Naive thymus-derived CD4-positive, alpha-beta T cell (primary cell): ENCODE measurements at regions of chr1 and their contacts with region 1.

Region 1: DNA sequence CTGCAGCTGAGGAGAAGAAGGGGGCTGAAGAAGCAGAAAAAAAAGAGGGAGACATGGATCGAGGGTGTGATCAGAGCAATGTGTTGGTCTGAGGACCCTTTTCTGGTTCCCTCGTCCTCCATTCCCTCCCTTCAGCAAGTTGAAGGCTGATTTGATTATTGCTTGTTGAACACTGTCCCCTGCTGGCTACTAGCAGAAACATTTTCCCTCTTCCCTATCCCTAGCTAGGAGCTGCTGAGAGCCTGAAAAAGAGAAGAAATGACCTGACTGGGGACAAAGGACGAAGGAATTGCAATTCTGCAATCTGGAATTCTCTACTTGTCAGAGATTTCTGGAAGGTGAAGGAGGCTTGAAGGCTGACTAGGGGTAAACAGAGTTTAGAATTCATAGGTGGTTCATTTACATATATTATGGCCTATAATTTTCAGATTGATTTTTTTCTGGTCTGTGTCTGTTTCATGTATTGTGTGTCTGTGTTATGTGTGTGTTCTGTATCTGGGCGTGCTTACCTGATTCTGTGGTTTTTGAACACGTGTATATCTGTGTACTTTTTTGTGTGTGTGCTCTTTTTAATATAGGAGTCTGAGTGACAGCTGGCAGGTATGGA is 9.8 kb downstream of the NHLH1 start:
- DNase-seq: peak in 6 of 9 donors; percentile 21 to 45 (median 36)
- ATAC-seq: peak; percentile 73
- H3K4me3 ChIP-seq: no peak overlapping the region
- H3K4me3 Mint-ChIP-seq: peak overlapping the region in 5 of 10 donors; percentile 5 to 54 (median 15)
- H3K27ac ChIP-seq: no peak overlapping the region
- H3K27ac Mint-ChIP-seq: peak overlapping the region in 2 of 9 donors; percentile 4 to 37
- H3K4me1 ChIP-seq: peaks cover 8 to 11% of the 10 kb centered on the region in 2 donors
- H3K4me1 Mint-ChIP-seq: peaks cover 7 to 19% (median 14%) of the 10 kb centered on the region in 7 donors
- H3K27me3 ChIP-seq: no peaks in the 10 kb centered on the region
- H3K27me3 Mint-ChIP-seq: peaks cover 0 to 7% (median 0%) of the 10 kb centered on the region in 5 donors

Region 2: DNA sequence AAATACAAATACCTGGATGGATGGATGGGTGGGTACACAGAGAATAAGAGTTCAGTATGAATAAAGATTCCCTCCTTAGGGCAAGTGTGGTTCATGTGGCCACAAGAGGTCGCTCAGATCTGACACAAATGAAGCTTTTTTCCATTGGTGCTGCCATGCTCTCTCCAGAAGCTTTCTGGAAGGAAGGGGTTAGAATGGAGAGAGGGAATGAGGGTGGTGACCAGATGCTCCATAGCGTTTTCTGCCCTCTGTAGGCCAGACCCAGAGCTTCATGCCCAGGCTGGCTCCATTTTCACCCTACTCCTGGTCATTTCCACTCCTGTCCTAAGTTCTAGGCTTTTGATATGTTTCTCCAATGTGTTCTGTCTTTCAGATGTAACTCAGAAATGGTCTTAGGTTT is 577.7 kb before region 1 on chr1:
- CTCF ChIA-PET with region 1: no interaction called
- POLR2A ChIA-PET with region 1: no interaction called
- intact Hi-C with region 1: loop called in 1 of 2 experiments (anchors 10 kb)
- DNase-seq: peak in 8 of 9 donors; percentile 11 to 52 (median 34)
- ATAC-seq: peak; percentile 66
- H3K4me3 ChIP-seq: no peak overlapping the region
- H3K4me3 Mint-ChIP-seq: no peak overlapping the region
- H3K27ac ChIP-seq: no peak overlapping the region
- H3K27ac Mint-ChIP-seq: no peak overlapping the region
- H3K4me1 ChIP-seq: peaks cover 8 to 48% of the 10 kb centered on the region in 2 donors
- H3K4me1 Mint-ChIP-seq: peaks cover 13 to 24% (median 16%) of the 10 kb centered on the region in 7 donors
- H3K27me3 ChIP-seq: no peaks in the 10 kb centered on the region
- H3K27me3 Mint-ChIP-seq: peaks cover 0 to 55% (median 3%) of the 10 kb centered on the region in 5 donors

Region 3: DNA sequence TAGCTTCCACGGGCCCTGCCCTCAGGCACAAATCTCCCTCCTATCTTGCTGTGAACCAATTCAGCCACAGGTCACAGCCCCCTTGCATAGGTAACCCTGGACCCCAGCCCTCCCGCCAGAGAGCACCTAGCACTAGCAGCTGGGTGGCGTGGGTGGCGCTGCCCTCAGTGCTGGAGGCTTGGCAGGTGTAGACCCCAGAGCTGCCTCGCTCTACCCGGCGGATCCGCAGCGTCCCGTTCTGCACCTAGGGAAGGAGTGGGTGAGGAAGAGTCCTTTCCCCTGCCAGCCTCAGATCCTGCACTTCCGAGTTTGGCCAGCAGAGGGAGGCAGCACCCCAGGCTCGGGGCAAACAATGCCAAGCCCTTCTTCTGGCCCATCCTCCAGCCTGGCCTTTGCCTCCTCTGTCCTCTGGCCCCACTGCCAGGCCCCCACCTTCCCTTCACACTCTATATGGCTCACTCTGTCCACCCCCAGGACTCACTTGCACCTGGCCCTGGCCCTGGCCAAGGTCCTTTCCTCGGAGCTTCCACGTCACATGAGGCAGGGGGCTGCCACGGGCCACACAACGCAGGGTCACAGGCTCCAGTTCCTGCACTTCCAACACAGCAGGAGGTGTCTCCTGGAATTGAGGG is 440.2 kb before region 1 on chr1:
- CTCF ChIA-PET with region 1: no interaction called
- POLR2A ChIA-PET with region 1: no interaction called
- intact Hi-C with region 1: loop called in 1 of 2 experiments (anchors 1 kb)
- DNase-seq: peak; percentile 49 to 90 (median 74)
- ATAC-seq: peak; percentile 90
- H3K4me3 ChIP-seq: no peak overlapping the region
- H3K4me3 Mint-ChIP-seq: no peak overlapping the region
- H3K27ac ChIP-seq: no peak overlapping the region
- H3K27ac Mint-ChIP-seq: peak overlapping the region in 1 of 9 donors; percentile 17
- H3K4me1 ChIP-seq: no peaks in the 10 kb centered on the region
- H3K4me1 Mint-ChIP-seq: peaks cover 0 to 20% (median 11%) of the 10 kb centered on the region in 7 donors
- H3K27me3 ChIP-seq: no peaks in the 10 kb centered on the region
- H3K27me3 Mint-ChIP-seq: peaks cover 0 to 23% (median 8%) of the 10 kb centered on the region in 5 donors

Region 4: DNA sequence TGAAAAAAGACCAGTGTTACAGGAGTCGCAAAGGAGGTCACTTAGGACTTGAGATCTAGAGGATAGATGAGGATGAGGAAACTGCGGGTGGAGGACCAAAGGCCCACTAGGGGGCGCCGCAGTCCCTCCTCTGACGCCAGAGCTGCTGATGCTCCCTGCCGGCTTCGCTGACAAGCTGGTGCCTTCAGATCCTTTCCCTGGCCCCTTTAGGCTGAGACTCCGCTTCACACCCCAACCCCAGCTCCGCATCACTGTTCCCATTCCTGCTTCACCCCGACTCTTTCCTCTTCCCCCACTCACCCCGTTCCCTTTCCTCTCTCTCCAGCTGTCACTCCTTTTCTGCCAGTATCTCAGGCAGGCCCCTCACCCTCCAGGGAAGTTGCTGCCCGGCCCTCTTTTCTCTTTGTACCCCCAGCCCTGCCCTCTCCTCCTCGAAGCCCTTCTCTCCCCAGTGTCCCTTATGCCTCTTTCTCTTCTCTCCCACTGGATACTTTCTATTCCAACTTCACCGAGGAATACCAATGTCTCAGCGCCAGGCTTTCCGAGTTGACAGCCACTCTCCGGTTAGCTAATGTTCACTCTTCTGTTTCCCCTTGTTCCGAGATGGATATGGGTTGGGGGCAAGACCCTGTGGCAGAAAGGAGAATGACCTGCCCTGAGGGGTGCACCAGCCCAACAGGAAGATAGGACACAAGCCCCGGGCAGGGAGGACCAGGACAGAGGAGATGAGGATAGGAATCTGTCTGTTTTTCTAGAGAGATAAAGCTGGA is 290.8 kb before region 1 on chr1:
- CTCF ChIA-PET with region 1: interaction called, 4 read pairs
- POLR2A ChIA-PET with region 1: no interaction called
- intact Hi-C with region 1: loop called in 1 of 2 experiments (anchors 1 kb)
- DNase-seq: peak; percentile 55 to 81 (median 72)
- ATAC-seq: peak; percentile 81
- H3K4me3 ChIP-seq: no peak overlapping the region
- H3K4me3 Mint-ChIP-seq: peak overlapping the region in 6 of 10 donors; percentile 9 to 47 (median 34)
- H3K27ac ChIP-seq: no peak overlapping the region
- H3K27ac Mint-ChIP-seq: peak overlapping the region in 7 of 9 donors; percentile 46 to 80 (median 76)
- H3K4me1 ChIP-seq: peaks cover 0 to 7% of the 10 kb centered on the region in 2 donors
- H3K4me1 Mint-ChIP-seq: peaks cover 10 to 24% (median 20%) of the 10 kb centered on the region in 7 donors
- H3K27me3 ChIP-seq: peaks cover 8 to 9% of the 10 kb centered on the region in 2 donors
- H3K27me3 Mint-ChIP-seq: peaks cover 18 to 27% (median 19%) of the 10 kb centered on the region in 5 donors

Region 5: GRCh38 chr1:160193091-160193819 is 183.4 kb before region 1 on chr1:
- CTCF ChIA-PET with region 1: interaction called, 8 read pairs
- POLR2A ChIA-PET with region 1: no interaction called
- intact Hi-C with region 1: loop called (anchors 1 kb)
- DNase-seq: peak; percentile 34 to 84 (median 70)
- ATAC-seq: peak; percentile 92
- H3K4me3 ChIP-seq: no peak overlapping the region
- H3K4me3 Mint-ChIP-seq: no peak overlapping the region
- H3K27ac ChIP-seq: no peak overlapping the region
- H3K27ac Mint-ChIP-seq: no peak overlapping the region
- H3K4me1 ChIP-seq: no peaks in the 10 kb centered on the region
- H3K4me1 Mint-ChIP-seq: peaks cover 0 to 2% (median 0%) of the 10 kb centered on the region in 7 donors
- H3K27me3 ChIP-seq: no peaks in the 10 kb centered on the region
- H3K27me3 Mint-ChIP-seq: peaks cover 0 to 5% (median 0%) of the 10 kb centered on the region in 5 donors

Region 6: DNA sequence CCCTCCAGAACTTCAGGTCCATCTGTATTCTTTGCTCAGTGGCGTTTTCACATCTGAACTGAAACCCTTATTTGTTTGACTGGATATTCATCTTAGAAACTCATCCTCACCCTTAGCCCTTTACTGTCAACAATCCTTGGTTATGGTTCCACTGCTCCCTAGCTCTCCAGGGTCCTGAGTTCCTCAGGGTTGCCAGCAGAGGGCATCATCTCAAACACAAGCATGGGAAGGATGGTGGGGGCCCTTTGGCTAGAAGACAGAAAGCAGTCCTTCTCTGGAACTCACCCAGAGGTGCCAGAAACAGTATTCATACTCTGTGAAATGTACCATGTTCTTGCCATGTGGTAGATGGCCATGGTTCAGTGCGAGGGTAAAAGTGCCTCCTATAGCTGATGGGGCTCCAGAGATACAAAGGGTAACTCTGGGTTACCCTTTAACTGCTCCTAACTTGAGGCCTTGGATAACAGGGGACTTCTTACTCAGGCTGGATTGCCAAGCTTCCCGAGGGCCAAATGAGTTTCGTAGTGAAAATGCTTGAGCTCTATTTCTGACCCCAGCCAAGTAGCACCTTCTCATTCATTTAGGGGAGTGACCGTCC is 22.1 kb before region 1 on chr1:
- CTCF ChIA-PET with region 1: interaction called, 10 read pairs
- POLR2A ChIA-PET with region 1: no interaction called
- intact Hi-C with region 1: loop called in 1 of 2 experiments (anchors 1 kb)
- DNase-seq: peak in 5 of 9 donors; percentile 8 to 23 (median 17)
- ATAC-seq: peak; percentile 45
- H3K4me3 ChIP-seq: no peak overlapping the region
- H3K4me3 Mint-ChIP-seq: no peak overlapping the region
- H3K27ac ChIP-seq: no peak overlapping the region
- H3K27ac Mint-ChIP-seq: peak overlapping the region in 4 of 9 donors; percentile 28 to 44 (median 40)
- H3K4me1 ChIP-seq: no peaks in the 10 kb centered on the region
- H3K4me1 Mint-ChIP-seq: peaks cover 0 to 5% (median 0%) of the 10 kb centered on the region in 7 donors
- H3K27me3 ChIP-seq: no peaks in the 10 kb centered on the region
- H3K27me3 Mint-ChIP-seq: no peaks in the 10 kb centered on the region

Region 7: DNA sequence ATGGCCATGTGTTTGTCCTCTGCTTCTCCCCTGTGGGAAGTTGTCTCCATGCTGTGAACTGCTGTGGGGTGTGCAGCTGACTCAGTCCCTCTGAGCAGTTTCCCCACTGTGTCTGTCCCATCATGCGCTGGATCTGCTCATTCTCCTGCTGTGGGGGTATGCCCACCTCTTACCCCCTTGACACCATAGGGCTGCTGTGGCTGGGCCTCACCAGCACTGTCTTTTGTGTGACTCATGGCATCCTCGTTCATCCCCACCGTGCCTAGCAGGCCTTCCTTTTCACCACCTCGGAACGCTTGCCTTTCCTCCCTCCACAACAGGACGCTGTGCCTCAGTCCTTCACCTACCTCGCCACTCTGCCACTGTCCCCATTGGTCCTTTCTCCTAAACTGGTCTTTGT is 51.0 kb after region 1 on chr1:
- CTCF ChIA-PET with region 1: no interaction called
- POLR2A ChIA-PET with region 1: no interaction called
- intact Hi-C with region 1: no loop called
- DNase-seq: no peak
- ATAC-seq: no peak
- H3K4me3 ChIP-seq: no peak overlapping the region
- H3K4me3 Mint-ChIP-seq: peak overlapping the region in 7 of 10 donors; percentile 21 to 74 (median 54)
- H3K27ac ChIP-seq: peak overlapping the region; percentile 68
- H3K27ac Mint-ChIP-seq: peak overlapping the region; percentile 84 to 99 (median 89)
- H3K4me1 ChIP-seq: peaks cover 45 to 51% of the 10 kb centered on the region in 2 donors
- H3K4me1 Mint-ChIP-seq: peaks cover 30 to 67% (median 58%) of the 10 kb centered on the region in 7 donors
- H3K27me3 ChIP-seq: no peaks in the 10 kb centered on the region
- H3K27me3 Mint-ChIP-seq: no peaks in the 10 kb centered on the region

Region 8: DNA sequence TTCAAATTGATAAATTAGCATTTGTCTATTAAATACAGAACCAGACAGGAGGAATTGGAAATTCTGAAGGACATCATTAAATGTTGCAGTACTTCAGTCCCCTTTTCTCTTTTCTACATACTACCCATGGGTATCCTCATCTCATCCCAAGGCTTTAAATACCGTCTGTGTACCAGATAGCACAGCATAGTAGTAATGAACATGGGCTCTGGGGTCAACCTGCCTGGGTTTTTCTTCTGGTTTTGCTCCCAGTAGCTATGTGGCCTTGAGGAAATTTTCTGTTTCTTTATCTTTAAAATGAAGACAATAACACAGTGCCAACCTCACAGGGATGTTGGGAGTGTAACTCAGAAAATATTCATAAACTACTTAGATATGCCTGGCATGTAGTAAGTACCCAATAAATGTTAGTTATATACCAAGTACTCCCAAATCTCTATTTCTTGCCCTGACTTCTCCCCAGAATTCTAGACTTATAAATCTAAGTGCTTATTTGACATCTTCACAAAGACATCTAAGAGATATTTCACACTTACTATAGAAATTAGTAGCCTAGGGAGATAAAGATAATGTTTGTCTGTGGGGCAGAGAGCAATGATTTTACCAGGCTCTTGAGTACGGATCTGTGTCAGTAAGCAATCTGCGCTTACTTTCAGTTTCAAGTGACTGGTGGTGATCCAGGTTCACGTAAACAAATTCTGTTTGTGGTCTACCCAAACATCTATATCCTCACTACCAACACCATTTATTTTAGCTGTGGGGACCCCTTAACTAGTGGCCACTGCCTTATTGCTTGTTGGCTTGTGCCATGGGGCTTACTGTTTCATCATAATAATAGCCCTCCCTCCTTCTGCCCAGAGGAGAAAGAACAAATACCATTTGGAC is 61.0 kb after region 1 on chr1:
- CTCF ChIA-PET with region 1: no interaction called
- POLR2A ChIA-PET with region 1: no interaction called
- intact Hi-C with region 1: no loop called
- DNase-seq: peak in 6 of 9 donors; percentile 30 to 57 (median 41)
- ATAC-seq: peak; percentile 85
- H3K4me3 ChIP-seq: peak overlapping the region; percentile 59
- H3K4me3 Mint-ChIP-seq: peak overlapping the region; percentile 77 to 94 (median 82)
- H3K27ac ChIP-seq: peak overlapping the region; percentile 80
- H3K27ac Mint-ChIP-seq: peak overlapping the region; percentile 91 to 99 (median 96)
- H3K4me1 ChIP-seq: peaks cover 11 to 33% of the 10 kb centered on the region in 2 donors
- H3K4me1 Mint-ChIP-seq: peaks cover 22 to 53% (median 46%) of the 10 kb centered on the region in 7 donors
- H3K27me3 ChIP-seq: no peaks in the 10 kb centered on the region
- H3K27me3 Mint-ChIP-seq: no peaks in the 10 kb centered on the region